ENCODE measurements at regions of chr4 and their contacts with region 1.

Region 1: DNA sequence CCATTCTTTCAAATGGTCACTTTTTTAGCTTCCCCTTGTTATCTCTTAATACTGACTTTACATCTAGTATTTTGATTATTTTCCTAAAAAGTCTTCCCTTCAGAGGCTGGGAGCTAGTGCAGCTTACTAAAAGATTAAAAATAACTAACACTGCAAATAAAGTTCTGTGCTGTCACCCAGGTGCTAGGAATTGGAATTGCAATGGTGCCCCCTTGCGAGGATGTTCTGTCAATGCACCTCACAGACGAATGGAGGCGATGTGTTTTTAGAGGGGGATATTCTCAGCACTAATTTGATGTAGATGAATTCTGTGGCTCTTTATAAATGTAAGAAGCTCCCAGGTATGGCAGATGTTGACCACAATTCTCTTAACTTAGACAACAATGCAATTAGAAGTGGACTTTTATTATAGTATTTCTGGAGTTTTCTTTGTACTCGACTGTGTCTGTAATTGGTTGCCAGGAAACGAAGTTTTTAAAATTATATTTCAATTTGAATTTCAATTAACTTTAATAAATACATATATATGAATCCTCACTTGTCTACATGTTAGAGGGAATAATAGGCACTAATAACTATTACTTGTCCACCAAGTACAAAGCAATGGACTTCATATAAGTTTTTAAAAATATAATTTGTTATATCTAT is 22.0 kb upstream of the SMIM31 start:
- DNase-seq: no peak
- H3K4me3 ChIP-seq: no peak overlapping the region
- H3K27me3 ChIP-seq: no peaks in the 10 kb centered on the region
- CTCF ChIP-seq: peak; percentile 88

Region 2: DNA sequence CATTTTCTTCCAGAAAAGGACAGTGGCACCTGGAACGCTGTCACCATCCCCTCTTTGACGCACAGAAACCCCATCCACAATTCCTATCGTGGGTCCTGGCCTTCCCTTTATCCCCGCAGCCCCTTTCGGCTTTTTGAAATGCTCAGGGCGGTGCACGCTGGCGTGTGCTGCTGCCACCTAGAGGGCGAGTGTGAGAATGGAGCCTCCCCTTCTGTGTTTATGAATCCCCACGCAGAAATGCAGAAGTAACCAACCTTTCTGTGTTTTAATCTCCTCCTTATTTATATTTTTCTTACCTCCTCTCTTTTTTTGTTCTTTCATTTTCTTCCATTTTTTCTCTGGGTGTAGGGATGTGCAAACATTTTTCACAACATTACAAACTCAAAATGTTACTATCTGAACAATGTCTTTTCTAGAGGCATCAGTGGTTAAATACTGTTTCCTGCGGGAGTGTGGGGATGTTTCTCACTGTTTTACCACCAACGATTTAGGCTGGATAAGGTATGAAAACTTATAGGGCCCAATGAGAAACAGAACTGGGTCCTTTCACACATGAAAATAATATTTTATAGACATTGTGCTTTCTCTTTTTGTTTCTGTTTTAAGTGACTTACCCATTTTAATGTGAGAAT is 1187.4 kb before region 1 on chr4:
- CTCF ChIA-PET with region 1: interaction called, 41 read pairs
- POLR2A ChIA-PET with region 1: no interaction called
- DNase-seq: no peak
- H3K4me3 ChIP-seq: peak overlapping the region; percentile 39
- H3K27me3 ChIP-seq: no peaks in the 10 kb centered on the region
- CTCF ChIP-seq: peak; percentile 98

Region 3: GRCh38 chr4:163556177-163556576 is 1175.8 kb before region 1 on chr4:
- CTCF ChIA-PET with region 1: interaction called, 41 read pairs
- POLR2A ChIA-PET with region 1: no interaction called
- DNase-seq: no peak
- H3K4me3 ChIP-seq: no peak overlapping the region
- H3K27me3 ChIP-seq: no peaks in the 10 kb centered on the region
- CTCF ChIP-seq: no peak

Region 4: DNA sequence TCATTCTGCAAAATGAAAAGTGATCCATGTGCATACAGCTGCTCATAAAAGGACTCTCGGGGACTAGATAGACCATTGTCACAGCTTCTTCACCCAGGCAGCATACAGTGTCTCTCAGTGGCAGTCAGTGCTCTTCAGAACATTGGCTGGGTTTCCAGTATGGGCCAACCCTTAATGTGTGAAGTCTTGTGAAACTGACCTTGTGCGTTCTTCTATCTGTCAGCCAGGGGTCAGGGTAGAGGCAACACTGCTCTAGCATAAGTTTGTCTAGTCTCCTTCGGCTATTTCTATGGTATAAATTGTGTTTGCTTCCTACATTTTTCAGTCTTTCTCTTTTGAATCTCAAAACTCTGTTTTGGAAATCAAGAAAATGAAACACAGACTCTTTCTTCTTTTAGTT is 15.1 kb before region 1 on chr4:
- CTCF ChIA-PET with region 1: interaction called, 15 read pairs
- POLR2A ChIA-PET with region 1: no interaction called
- DNase-seq: no peak
- H3K4me3 ChIP-seq: no peak overlapping the region
- H3K27me3 ChIP-seq: no peaks in the 10 kb centered on the region
- CTCF ChIP-seq: no peak

Region 5: DNA sequence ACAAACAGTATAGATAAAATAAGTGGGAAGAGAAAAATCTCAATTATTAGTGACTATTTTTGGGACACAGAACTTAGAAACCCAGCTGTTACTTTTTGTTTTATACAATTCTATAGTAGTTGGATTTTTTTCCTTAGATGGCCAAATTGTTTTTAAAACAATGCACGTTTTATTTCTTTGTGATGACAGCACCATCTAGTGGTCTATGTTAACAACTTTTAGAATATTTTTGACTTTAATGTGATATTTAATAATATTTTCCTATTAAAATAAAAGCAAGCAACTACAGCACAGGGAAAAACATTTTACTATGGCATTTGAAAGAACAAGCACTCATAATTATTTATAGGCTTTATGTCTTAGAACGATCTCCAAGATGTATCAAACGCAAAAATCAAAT is 16.4 kb after region 1 on chr4:
- CTCF ChIA-PET with region 1: interaction called, 16 read pairs
- POLR2A ChIA-PET with region 1: no interaction called
- DNase-seq: no peak
- H3K4me3 ChIP-seq: no peak overlapping the region
- H3K27me3 ChIP-seq: no peaks in the 10 kb centered on the region
- CTCF ChIP-seq: peak; percentile 34

Measured in BJ (cell line).